Lower leg skin (tissue), 4 donors: ENCODE measurements at regions of chr11 and their contacts with region 1.

Region 1: DNA sequence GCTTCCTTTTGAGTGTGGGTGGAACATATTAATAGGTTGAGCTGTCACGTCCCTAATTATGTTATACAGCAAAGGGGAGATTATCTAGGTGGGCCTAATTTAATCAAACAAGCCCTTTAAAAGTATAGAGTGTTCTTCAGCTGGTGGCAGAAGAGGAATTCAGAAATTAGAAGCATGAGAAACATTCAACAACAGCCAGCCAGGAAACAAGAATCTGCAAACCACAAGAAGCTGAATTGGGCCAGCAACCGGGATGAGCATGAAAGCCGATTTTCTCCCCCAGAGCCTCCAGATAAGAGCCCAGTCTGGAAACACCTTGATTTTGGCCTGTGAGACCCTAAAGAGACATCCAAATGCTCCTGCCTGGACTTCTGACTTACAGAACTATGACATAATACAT is 105.8 kb upstream of the LDLRAD3 start:
- DNase-seq: no peak
- H3K4me3 ChIP-seq: no peak overlapping the region
- CTCF ChIP-seq: no peak
- POLR2A ChIP-seq: no peak

Region 2: GRCh38 chr11:36258730-36259360 is 420.8 kb after region 1 on chr11:
- intact Hi-C with region 1: loop called (anchors 10 kb)
- DNase-seq: peak in 1 of 2 donors; percentile 29
- H3K4me3 ChIP-seq: no peak overlapping the region
- CTCF ChIP-seq: no peak
- POLR2A ChIP-seq: no peak